Activated B cell treated with CpG ODN at 0.5 μM for 24 hours (primary cell): ENCODE measurements at regions of chr1 and their contacts with region 1.

Region 1: DNA sequence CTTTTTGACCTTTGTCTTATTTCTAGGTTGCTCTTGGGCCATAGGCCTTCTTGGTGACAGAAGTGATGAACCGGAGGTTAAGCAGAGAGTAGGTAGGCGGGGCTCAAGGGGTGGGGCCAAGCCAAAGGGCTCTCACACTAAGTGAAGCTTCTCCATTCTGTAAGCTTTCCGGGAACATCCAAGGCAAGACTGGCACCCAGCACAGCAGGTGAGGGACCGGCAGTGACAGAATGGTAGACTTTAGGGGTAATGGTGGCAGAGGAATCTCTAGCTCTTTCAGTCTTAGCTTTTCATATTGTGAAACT is at the start of gene TNFAIP8L2:
- DNase-seq: peak; percentile 58
- ATAC-seq: peak; percentile 88
- H3K4me3 Mint-ChIP-seq: peak within 1 kb of the TSS; percentile 96
- H3K27ac Mint-ChIP-seq: peak within 1 kb of the TSS; percentile 95
- H3K4me1 Mint-ChIP-seq: peaks cover 44% of the 10 kb centered on the region
- H3K27me3 Mint-ChIP-seq: no peaks in the 10 kb centered on the region
- CTCF ChIP-seq: no peak
- total RNA-seq, gene TNFAIP8L2: 8.5 and 9.3 TPM in 2 replicates

Region 2: GRCh38 chr1:151098126-151098525 is 58.3 kb before region 1 on chr1:
- CTCF ChIA-PET with region 1: interaction called, 160 read pairs
- POLR2A ChIA-PET with region 1: interaction called, 16 read pairs
- intact Hi-C with region 1: loop called (anchors 1 kb)
- DNase-seq: no peak
- ATAC-seq: no peak
- H3K4me3 Mint-ChIP-seq: no peak overlapping the region
- H3K27ac Mint-ChIP-seq: no peak overlapping the region
- H3K4me1 Mint-ChIP-seq: no peaks in the 10 kb centered on the region
- H3K27me3 Mint-ChIP-seq: no peaks in the 10 kb centered on the region
- CTCF ChIP-seq: no peak

Region 3: DNA sequence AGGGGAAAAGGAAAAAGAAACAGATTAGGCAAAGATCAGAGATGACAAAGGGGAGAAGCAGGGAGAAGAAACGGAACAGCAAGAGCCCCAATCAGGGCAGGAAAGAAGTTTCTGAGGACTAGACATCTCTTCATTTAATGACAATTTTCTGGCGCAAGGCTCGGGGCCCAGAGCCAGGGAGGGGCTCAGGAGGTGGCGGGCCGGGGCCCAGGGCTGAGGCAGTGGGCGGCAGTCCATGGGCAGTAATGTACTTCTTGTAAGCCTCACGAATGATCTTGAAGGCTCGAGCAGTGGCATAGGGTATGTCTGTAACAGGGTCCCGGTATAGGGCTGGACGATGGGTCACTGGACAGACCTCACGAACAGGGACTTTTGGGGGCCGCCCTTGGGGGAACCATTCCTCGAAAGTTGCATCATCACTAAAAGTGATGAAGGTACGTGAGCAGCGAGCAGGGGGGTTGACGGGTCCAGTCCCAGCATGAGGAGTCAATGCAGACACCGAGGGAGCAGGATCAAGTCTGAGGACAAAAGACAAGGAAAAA is 20.1 kb after region 1 on chr1:
- CTCF ChIA-PET with region 1: no interaction called
- POLR2A ChIA-PET with region 1: interaction called, 11 read pairs
- intact Hi-C with region 1: no loop called
- DNase-seq: no peak
- ATAC-seq: no peak
- H3K4me3 Mint-ChIP-seq: no peak overlapping the region
- H3K27ac Mint-ChIP-seq: no peak overlapping the region
- H3K4me1 Mint-ChIP-seq: no peaks in the 10 kb centered on the region
- H3K27me3 Mint-ChIP-seq: no peaks in the 10 kb centered on the region
- CTCF ChIP-seq: no peak

Region 4: DNA sequence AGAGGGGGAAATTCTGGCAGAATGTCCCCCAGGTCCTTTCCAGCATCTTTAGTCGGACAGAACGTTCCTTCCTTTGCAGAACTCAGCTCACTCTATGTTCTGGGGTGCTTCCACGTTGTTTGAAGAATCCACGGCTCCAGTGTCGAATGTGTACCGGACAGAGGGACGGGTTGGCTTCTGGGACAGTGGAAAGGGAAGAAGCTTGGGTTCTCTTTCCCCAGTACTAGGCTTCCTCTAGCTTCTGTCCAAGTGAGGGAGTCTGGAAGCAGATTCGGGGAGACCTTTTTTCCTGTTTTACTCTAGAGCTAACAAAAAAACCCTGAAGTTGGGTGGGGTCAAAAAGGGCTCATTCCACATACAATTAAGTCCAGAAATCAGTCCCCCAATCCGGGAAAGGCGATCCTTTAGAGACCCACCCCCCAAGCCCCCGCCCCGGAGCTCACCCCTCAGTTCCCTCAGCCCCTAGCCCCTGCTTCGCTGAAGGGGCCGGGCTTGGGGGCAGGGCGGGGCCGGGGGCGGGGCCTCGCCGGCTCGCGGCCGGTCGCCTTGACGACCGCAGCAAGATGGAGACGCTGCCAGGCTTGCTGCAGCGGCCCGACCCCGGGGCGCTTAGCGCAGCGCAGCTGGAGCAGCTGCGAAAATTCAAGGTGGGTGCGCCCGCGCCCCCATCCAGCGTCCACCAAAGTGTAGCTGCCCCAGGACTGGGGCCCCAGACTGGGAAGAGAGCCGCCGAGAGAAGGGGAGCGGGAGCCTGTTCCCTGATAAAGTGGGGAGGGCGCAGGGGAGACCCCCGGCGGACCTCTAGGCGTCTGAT is 564.7 kb after region 1 on chr1 and contains the start of gene RIIAD1:
- CTCF ChIA-PET with region 1: no interaction called
- POLR2A ChIA-PET with region 1: no interaction called
- intact Hi-C with region 1: no loop called
- DNase-seq: peak; percentile 36
- ATAC-seq: peak; percentile 98
- H3K4me3 Mint-ChIP-seq: peak within 1 kb of the TSS; percentile 83
- H3K27ac Mint-ChIP-seq: peak within 1 kb of the TSS; percentile 35
- H3K4me1 Mint-ChIP-seq: peaks cover 27% of the 10 kb centered on the region
- H3K27me3 Mint-ChIP-seq: peaks cover 50% of the 10 kb centered on the region
- CTCF ChIP-seq: no peak
- total RNA-seq, gene RIIAD1: not detected in 2 replicates